ENCODE measurements at regions of chr15 and their contacts with region 1.

Region 1: DNA sequence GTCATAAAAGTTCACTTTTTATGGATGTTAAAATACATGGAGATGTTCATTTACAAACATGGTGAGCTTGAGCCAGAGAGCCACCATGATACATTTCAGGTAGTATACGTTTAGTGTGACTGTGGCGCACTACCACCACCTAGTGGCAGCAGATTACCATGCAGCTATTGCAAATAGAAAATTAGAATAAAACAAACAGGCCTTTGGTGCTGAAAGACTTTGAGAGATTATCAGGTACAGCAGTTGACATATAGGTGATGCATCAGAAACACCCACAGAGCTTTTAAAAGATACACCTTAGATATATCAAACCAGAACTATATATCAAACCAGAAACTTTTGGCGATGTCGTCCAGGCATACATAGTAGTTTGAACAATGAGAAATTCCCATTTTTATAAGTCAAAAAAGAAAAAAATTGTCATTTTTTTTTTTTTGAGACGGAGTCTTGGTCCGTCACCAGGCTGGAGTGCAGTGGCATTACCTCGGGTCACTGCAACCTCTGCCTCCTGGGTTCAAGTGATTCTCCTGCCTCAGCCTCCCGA is 42.0 kb upstream of the ICE2 start:
- DNase-seq: peak; percentile 60
- CTCF ChIP-seq: peak; percentile 85

Region 2: DNA sequence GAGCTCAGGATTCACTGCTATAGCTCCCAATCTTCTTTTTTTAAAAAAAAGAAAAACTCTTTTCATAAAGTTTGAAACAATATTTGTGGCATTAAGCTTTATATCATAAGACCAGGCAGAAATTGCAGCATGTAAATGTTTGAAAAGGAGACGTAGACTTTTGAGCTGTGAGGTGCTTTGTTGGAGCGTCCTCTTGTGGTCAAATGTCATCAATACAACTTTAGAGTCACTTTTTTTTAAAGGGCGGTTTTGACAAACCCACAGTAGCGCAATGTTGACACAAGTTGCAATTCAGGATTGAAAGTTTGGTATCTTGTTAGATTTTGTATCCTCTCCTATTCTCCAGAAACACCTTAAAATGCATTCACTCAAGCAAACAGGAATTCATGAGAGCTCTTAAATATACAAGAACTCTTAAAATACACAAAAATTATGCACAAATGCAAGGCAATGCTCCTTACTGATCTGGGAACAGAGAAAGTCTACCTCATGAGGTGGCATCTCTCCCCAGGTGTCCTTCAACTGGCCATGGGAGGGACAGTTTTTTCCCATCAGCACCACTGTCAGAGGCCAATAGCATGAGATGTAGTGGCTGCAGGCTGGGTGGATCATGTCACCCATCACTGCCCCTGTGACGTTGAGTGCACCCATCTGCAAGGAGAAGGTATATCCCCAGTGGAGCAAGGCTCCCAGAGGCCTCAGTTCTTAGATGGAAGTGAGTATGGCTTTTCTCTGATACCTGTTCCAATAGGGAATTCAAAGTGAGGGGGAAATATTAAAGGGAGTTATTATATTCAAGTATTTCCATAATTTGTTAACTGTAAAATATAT is 193.9 kb before region 1 on chr15:
- CTCF ChIA-PET with region 1: interaction called, 20 read pairs
- POLR2A ChIA-PET with region 1: no interaction called
- DNase-seq: peak; percentile 29
- CTCF ChIP-seq: peak; percentile 66

Region 3: GRCh38 chr15:60374628-60375081 is 146.2 kb before region 1 on chr15:
- CTCF ChIA-PET with region 1: interaction called, 10 read pairs
- POLR2A ChIA-PET with region 1: no interaction called
- DNase-seq: no peak
- CTCF ChIP-seq: no peak

Region 4: DNA sequence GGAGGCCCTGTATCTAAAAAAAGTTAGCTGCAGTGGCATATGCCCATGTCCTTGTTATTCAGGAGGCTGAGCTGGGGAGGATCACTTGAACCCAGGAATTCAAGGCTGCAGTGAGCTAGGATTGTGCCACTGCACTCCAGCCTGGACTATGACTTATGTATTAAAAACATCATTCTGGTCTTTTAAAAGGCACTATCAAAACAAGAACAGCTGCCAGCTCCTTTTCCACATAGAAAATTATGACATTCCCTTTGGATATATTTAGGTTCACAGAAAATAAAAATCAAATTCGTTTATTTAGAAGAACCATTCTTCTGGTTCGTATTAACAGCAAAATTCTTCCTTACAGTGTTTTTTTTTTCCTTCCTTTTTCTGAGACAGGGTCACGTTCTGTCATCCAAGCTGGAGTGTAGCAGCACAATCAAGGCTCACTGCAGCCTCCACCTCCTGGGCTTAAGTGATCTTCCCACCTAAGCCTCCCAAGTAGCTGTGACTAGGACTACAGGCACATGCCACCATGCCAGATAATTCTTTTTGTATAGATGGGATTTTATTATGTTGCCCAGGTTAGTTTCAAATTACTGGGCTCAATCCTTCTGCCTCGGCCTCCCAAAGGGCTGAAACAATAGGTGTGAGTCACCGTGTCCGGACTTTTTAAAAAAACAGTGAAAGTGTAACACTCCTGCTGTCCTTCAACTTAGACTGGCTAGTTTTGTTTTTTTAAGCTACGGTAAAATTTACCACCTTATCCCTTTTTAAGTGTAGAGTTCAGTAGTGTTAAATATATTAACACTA is 55.9 kb before region 1 on chr15:
- CTCF ChIA-PET with region 1: no interaction called
- POLR2A ChIA-PET with region 1: no interaction called
- DNase-seq: no peak
- CTCF ChIP-seq: no peak

Region 5: DNA sequence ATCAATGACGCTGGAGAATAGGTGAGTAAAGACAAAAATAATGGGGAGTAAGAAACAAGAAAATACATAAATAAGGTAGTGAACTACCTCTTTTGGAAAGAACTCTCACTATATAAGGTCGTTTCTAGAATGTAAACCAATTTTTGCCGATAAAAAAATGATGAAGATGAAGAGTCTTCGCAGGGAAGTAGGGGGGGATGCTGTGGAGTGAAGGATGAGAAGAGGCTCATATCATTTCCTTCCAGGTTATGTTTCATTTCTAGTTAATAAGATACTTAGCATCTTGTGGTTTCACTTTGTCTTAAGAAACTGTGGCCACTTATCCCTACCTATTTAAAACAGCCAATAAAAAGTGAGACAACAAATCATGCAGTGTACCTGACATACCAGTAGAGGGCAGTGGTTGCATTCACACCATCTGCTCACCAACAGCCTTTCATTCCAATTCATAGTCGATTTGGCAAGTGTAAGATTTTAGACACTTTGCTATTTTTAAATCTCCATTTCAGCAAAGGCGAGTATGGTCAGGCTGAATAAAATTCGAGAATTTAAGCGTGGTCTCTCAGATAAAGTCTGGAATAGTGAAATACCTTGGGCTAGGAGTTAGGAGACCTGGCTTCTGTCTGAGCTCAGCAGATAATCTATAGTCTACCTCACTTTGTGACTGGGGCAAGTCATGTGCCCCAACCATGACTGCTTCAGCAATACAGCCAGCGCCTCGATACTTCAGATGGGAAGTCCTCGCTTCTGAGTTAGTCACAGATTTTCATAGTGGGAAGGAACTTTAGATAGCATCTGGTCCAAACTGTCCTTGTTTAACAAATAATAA is 13.1 kb before region 1 on chr15:
- CTCF ChIA-PET with region 1: interaction called, 193 read pairs
- POLR2A ChIA-PET with region 1: no interaction called
- DNase-seq: peak; percentile 72
- CTCF ChIP-seq: peak; percentile 83

Region 6: GRCh38 chr15:60541481-60542299 is 20.8 kb after region 1 on chr15:
- CTCF ChIA-PET with region 1: interaction called, 36 read pairs
- POLR2A ChIA-PET with region 1: no interaction called
- DNase-seq: no peak
- CTCF ChIP-seq: no peak

Region 7: GRCh38 chr15:60551781-60552161 is 30.9 kb after region 1 on chr15:
- CTCF ChIA-PET with region 1: interaction called, 38 read pairs
- POLR2A ChIA-PET with region 1: no interaction called
- DNase-seq: no peak
- CTCF ChIP-seq: peak; percentile 23

Region 8: GRCh38 chr15:60660290-60661051 is 139.6 kb after region 1 on chr15:
- CTCF ChIA-PET with region 1: no interaction called
- POLR2A ChIA-PET with region 1: no interaction called
- DNase-seq: peak; percentile 22
- CTCF ChIP-seq: no peak

Region 9: GRCh38 chr15:60916679-60917460 is 396.0 kb after region 1 on chr15:
- CTCF ChIA-PET with region 1: interaction called, 13 read pairs
- POLR2A ChIA-PET with region 1: no interaction called
- DNase-seq: peak; percentile 74
- CTCF ChIP-seq: peak; percentile 76

Measured in GM10248 (cell line).